A673 (cell line): ENCODE measurements at regions of chr21 and their contacts with region 1.

Region 1: GRCh38 chr21:36487641-36488307 is 7.9 kb upstream of the CLDN14 start:
- DNase-seq: peak; percentile 95
- H3K4me3 ChIP-seq: no peak overlapping the region
- H3K27ac ChIP-seq: peak overlapping the region; percentile 88
- H3K4me1 ChIP-seq: peaks cover 47% of the 10 kb centered on the region
- H3K27me3 ChIP-seq: no peaks in the 10 kb centered on the region
- CTCF ChIP-seq: no peak

Region 2: GRCh38 chr21:36419996-36420395 is 67.8 kb before region 1 on chr21:
- CTCF ChIA-PET with region 1: no interaction called
- POLR2A ChIA-PET with region 1: no interaction called
- intact Hi-C with region 1: loop called (anchors 5 kb)
- DNase-seq: peak; percentile 90
- H3K4me3 ChIP-seq: no peak overlapping the region
- H3K27ac ChIP-seq: peak overlapping the region; percentile 52
- H3K4me1 ChIP-seq: peaks cover 27% of the 10 kb centered on the region
- H3K27me3 ChIP-seq: no peaks in the 10 kb centered on the region
- CTCF ChIP-seq: peak; percentile 86

Region 3: DNA sequence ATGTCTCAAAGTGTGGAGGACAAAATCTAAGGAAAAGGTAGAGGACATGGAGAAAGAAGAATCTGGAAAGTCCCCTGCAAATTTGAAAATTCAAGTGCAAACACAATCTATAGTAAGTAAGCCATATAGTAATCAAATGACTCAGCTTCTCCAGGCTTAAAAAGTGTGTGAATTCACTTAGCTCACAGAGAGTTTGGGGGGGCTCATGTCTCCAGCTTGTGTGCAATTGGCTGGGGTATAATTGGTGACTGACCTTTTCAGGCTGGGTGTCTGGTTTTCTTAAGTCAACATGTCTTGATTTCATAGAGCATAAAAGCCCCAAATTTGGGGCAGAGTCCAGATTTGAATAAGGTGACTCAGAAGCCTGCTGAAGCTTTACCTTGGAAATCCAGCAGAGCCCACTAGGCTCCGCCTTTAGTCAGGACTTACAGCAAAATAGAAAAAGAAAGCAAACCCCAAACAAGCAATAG is 16.5 kb before region 1 on chr21:
- CTCF ChIA-PET with region 1: no interaction called
- POLR2A ChIA-PET with region 1: interaction called, 12 read pairs
- intact Hi-C with region 1: no loop called
- DNase-seq: no peak
- H3K4me3 ChIP-seq: no peak overlapping the region
- H3K27ac ChIP-seq: no peak overlapping the region
- H3K4me1 ChIP-seq: peaks cover 9% of the 10 kb centered on the region
- H3K27me3 ChIP-seq: no peaks in the 10 kb centered on the region
- CTCF ChIP-seq: no peak

Region 4: GRCh38 chr21:36589355-36589971 is 101.7 kb after region 1 on chr21:
- CTCF ChIA-PET with region 1: no interaction called
- POLR2A ChIA-PET with region 1: interaction called, 13 read pairs
- intact Hi-C with region 1: loop called (anchors 5 kb)
- DNase-seq: peak; percentile 81
- H3K4me3 ChIP-seq: no peak overlapping the region
- H3K27ac ChIP-seq: peak overlapping the region; percentile 4
- H3K4me1 ChIP-seq: peaks cover 8% of the 10 kb centered on the region
- H3K27me3 ChIP-seq: no peaks in the 10 kb centered on the region
- CTCF ChIP-seq: peak; percentile 83

Region 5: DNA sequence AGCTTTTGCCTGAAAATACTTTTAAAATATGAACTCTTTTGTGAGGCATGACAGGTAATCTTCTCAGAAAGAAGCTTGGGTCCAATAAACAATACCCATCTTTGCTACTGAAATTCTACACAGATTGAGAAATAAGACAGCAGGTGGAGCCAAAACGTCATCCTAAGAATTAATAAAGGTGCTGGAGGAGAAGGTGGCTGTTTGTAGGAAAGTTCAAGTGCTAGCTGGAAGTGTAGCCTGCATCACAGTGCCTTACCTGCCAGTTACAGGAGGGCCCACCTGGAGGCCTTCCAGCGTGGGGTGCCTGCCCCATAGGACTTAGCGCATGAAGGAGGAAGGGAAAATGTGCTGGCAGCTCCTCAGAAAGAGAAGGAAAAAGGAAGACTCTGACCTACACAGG is 679.0 kb after region 1 on chr21:
- CTCF ChIA-PET with region 1: no interaction called
- POLR2A ChIA-PET with region 1: interaction called, 29 read pairs
- intact Hi-C with region 1: no loop called
- DNase-seq: no peak
- H3K4me3 ChIP-seq: no peak overlapping the region
- H3K27ac ChIP-seq: no peak overlapping the region
- H3K4me1 ChIP-seq: peaks cover 16% of the 10 kb centered on the region
- H3K27me3 ChIP-seq: no peaks in the 10 kb centered on the region
- CTCF ChIP-seq: peak; percentile 40